A673 (cell line): ENCODE measurements at regions of chr3 and their contacts with region 1.

Region 1: GRCh38 chr3:52001443-52001974 is 5.8 kb upstream of the RPL29 start:
- DNase-seq: peak; percentile 68
- H3K4me3 ChIP-seq: no peak overlapping the region
- H3K27ac ChIP-seq: no peak overlapping the region
- H3K4me1 ChIP-seq: peaks cover 18% of the 10 kb centered on the region
- H3K27me3 ChIP-seq: no peaks in the 10 kb centered on the region
- CTCF ChIP-seq: peak; percentile 83

Region 2: GRCh38 chr3:52056968-52057805 is 55.7 kb after region 1 on chr3:
- CTCF ChIA-PET with region 1: interaction called, 4 read pairs
- POLR2A ChIA-PET with region 1: no interaction called
- intact Hi-C with region 1: loop called (anchors 5 kb)
- DNase-seq: peak; percentile 96
- H3K4me3 ChIP-seq: peak overlapping the region; percentile 58
- H3K27ac ChIP-seq: peak overlapping the region; percentile 58
- H3K4me1 ChIP-seq: no peaks in the 10 kb centered on the region
- H3K27me3 ChIP-seq: no peaks in the 10 kb centered on the region
- CTCF ChIP-seq: no peak

Region 3: GRCh38 chr3:52123106-52123725 is 121.7 kb after region 1 on chr3:
- CTCF ChIA-PET with region 1: interaction called, 14 read pairs
- POLR2A ChIA-PET with region 1: no interaction called
- intact Hi-C with region 1: loop called (anchors 1 kb)
- DNase-seq: peak; percentile 34
- H3K4me3 ChIP-seq: no peak overlapping the region
- H3K27ac ChIP-seq: no peak overlapping the region
- H3K4me1 ChIP-seq: no peaks in the 10 kb centered on the region
- H3K27me3 ChIP-seq: no peaks in the 10 kb centered on the region
- CTCF ChIP-seq: peak; percentile 78

Region 4: DNA sequence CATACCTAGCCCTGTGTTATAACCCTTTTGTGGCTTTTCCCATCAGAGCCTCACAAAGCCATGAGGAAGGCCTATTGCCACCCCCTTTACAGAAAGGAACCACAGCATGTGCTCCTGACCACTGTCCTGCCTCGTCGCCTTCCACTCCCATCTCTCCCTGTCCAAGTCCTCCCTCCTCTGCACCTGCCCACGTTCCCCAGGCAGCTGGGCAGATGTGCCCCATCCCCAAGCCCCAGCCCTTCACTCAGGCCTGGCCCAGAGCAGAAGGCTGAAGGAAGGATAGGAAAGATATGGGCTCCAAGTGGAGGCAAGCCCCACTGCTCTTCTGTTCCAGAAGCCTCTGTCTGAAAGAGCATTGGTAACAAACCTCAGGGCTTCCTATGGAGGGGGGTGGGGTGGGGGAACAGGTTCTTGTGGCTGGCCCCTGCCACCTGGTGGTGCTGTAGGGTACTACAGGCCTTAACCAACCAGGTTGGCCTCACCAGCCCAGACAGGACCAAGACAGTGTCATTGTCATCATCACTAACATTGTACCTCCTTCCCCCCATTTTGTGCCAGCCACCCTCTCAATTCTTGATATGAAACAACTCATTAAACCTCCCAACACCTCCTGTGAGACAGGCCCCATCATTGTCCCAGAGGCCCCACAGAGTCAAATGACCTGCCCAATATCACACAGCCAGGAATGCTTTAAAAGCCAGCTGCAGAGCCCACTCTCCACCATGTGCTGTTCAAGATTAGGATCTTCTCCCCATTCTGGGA is 142.7 kb after region 1 on chr3:
- CTCF ChIA-PET with region 1: interaction called, 3 read pairs
- POLR2A ChIA-PET with region 1: no interaction called
- intact Hi-C with region 1: loop called (anchors 1 kb)
- DNase-seq: peak; percentile 63
- H3K4me3 ChIP-seq: no peak overlapping the region
- H3K27ac ChIP-seq: no peak overlapping the region
- H3K4me1 ChIP-seq: no peaks in the 10 kb centered on the region
- H3K27me3 ChIP-seq: no peaks in the 10 kb centered on the region
- CTCF ChIP-seq: peak; percentile 68

Region 5: GRCh38 chr3:52220380-52221026 is 219.0 kb after region 1 on chr3:
- CTCF ChIA-PET with region 1: no interaction called
- POLR2A ChIA-PET with region 1: interaction called, 10 read pairs
- intact Hi-C with region 1: no loop called
- DNase-seq: peak; percentile 71
- H3K4me3 ChIP-seq: no peak overlapping the region
- H3K27ac ChIP-seq: no peak overlapping the region
- H3K4me1 ChIP-seq: no peaks in the 10 kb centered on the region
- H3K27me3 ChIP-seq: no peaks in the 10 kb centered on the region
- CTCF ChIP-seq: peak; percentile 72

Region 6: GRCh38 chr3:52339612-52340011 is 338.1 kb after region 1 on chr3:
- CTCF ChIA-PET with region 1: no interaction called
- POLR2A ChIA-PET with region 1: no interaction called
- intact Hi-C with region 1: loop called (anchors 2 kb)
- DNase-seq: peak; percentile 71
- H3K4me3 ChIP-seq: no peak overlapping the region
- H3K27ac ChIP-seq: no peak overlapping the region
- H3K4me1 ChIP-seq: no peaks in the 10 kb centered on the region
- H3K27me3 ChIP-seq: no peaks in the 10 kb centered on the region
- CTCF ChIP-seq: peak; percentile 60